Activated CD4-positive, alpha-beta memory T cell treated with anti-CD3 and anti-CD28 coated beads, Interleukin-2, amount 10 ng/mL, durations not matched to agents 7 days and 5 days (primary cell): ENCODE measurements at regions of chr20 and their contacts with region 1.

Region 1: GRCh38 chr20:33731693-33732165 is at the start of gene ZNF341:
- DNase-seq: peak; percentile 91
- H3K4me3 Mint-ChIP-seq: peak within 1 kb of the TSS; percentile 80
- H3K27ac Mint-ChIP-seq: peak within 1 kb of the TSS; percentile 91
- H3K4me1 Mint-ChIP-seq: peaks cover 28% of the 10 kb centered on the region
- H3K27me3 Mint-ChIP-seq: no peaks in the 10 kb centered on the region
- total RNA-seq, gene ZNF341: 5.6 to 5.8 TPM

Region 2: DNA sequence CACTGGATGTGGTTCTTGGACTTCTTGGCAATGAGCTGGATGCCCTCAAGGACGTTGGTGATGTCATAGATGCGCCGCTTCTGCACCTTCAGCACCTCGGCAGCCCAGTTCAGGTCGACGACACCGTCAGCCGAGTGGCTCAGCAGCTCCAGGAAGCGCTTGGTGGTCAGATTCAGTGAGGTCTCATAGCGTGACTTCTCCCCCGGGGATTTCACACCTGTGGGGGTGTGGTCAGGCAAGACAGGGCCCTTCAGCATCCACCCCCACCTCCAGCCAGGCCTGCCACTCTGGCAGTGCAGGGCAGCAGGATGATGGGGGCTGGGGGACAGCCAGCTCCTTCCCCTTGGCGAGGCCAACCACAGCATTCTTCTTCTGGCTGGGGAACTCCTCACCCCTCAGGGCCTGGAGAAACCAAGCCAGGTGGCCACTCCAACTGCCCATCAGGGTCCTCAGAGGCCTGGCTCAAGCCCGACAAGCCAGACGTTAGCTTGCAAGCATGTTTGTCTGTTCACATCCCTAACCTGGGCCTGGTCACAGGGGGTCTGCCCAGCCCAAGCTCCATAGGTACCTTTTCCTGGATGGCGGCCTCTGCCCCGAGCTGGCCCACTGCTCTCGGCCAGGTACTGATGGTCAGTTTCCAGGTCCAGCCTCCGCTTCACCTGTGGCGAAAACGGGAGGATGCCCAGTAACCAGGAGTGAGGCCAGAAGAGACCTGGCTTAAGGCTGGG is 51.8 kb before region 1 on chr20:
- CTCF ChIA-PET with region 1: interaction called, 8 read pairs
- POLR2A ChIA-PET with region 1: interaction called, 18 read pairs
- DNase-seq: peak; percentile 78
- H3K4me3 Mint-ChIP-seq: no peak overlapping the region
- H3K27ac Mint-ChIP-seq: peak overlapping the region; percentile 90
- H3K4me1 Mint-ChIP-seq: peaks cover 81% of the 10 kb centered on the region
- H3K27me3 Mint-ChIP-seq: no peaks in the 10 kb centered on the region

Region 3: GRCh38 chr20:33686100-33686983 is 45.4 kb before region 1 on chr20 and contains the start of gene E2F1:
- CTCF ChIA-PET with region 1: interaction called, 8 read pairs
- POLR2A ChIA-PET with region 1: interaction called, 18 read pairs
- DNase-seq: peak; percentile 98
- H3K4me3 Mint-ChIP-seq: peak within 1 kb of the TSS; percentile 94
- H3K27ac Mint-ChIP-seq: peak within 1 kb of the TSS; percentile 94
- H3K4me1 Mint-ChIP-seq: peaks cover 81% of the 10 kb centered on the region
- H3K27me3 Mint-ChIP-seq: no peaks in the 10 kb centered on the region
- total RNA-seq, gene E2F1: 60.0 to 61.7 TPM

Region 4: DNA sequence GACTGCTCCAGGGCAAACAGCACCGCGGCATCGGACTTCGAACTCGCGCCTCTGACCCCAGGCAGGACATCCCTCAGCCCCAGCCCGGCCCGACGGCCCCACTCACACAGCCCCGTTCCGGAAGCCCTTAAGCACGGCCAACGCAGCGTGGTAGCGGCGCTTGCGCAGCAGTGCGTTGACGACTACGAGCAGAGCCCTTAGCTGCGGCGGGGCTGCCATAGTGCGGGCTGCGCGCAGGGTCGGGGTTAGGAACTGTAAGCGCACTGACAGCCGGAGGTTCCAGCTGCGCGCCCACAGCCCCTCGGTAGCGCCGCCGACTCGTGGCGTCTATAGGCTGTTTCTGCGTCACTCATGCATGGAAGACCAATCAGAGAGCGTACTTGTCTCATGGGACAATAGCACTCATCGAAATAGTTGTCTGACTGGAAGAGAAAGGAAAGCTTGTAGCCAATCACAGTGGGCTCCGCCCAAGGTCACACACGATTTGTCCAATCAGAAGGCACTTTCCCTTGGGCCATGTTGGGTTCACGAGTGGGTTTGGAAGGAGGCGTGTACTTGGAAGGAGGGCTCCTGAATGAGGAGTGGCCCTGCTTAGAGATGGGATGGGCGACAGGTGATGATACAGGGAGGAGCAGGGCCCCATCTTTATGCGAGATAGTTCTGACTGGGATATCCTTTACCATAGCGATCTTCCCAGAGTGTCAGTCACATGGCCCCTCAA is 11.6 kb before region 1 on chr20 and contains the start of gene PXMP4:
- CTCF ChIA-PET with region 1: interaction called, 12 read pairs
- POLR2A ChIA-PET with region 1: interaction called, 27 read pairs
- DNase-seq: peak; percentile 93
- H3K4me3 Mint-ChIP-seq: peak within 1 kb of the TSS; percentile 85
- H3K27ac Mint-ChIP-seq: peak within 1 kb of the TSS; percentile 59
- H3K4me1 Mint-ChIP-seq: peaks cover 28% of the 10 kb centered on the region
- H3K27me3 Mint-ChIP-seq: no peaks in the 10 kb centered on the region
- total RNA-seq, gene PXMP4: 13.9 to 15.8 TPM

Region 5: GRCh38 chr20:33810885-33811777 is 79.4 kb after region 1 on chr20 and contains the start of gene CHMP4B:
- CTCF ChIA-PET with region 1: interaction called, 6 read pairs
- POLR2A ChIA-PET with region 1: interaction called, 25 read pairs
- DNase-seq: peak; percentile 99
- H3K4me3 Mint-ChIP-seq: peak within 1 kb of the TSS; percentile 96
- H3K27ac Mint-ChIP-seq: peak within 1 kb of the TSS; percentile 88
- H3K4me1 Mint-ChIP-seq: peaks cover 33% of the 10 kb centered on the region
- H3K27me3 Mint-ChIP-seq: no peaks in the 10 kb centered on the region
- total RNA-seq, gene CHMP4B: 86.7 to 86.9 TPM

Region 6: DNA sequence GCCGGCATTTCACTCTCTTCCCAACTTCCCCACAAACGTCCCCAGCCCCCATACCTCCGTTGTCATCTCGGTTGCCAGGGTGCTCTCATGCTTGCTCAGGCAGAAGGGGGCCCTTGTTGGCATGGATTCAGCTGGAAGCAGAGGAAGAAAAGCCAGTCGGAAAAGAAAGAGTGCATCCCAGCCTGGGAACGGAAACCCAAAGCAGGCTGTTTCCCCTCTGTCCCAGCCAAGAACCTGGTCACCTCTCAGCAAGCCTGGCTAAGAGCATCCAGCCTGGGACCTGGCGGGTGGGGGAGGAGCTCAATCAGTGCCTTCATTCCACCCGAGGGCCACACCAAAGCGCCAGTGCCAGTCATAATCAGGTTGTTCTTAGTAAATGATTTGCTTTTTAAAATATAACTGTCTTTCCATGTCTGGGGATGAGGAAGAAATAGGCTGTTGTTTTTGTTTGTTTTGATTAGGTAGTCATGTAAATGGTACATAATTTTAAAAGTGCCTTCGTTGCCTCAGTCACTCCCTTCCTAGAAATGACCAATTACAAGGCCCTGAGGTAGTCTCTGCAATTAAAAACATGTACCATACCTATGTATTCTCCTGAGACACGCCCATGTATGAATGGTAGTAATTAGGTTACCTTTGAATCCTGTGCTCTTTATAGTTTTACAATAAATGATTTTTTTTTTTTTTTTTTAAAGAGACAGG is 100.5 kb after region 1 on chr20:
- CTCF ChIA-PET with region 1: no interaction called
- POLR2A ChIA-PET with region 1: no interaction called
- DNase-seq: no peak
- H3K4me3 Mint-ChIP-seq: no peak overlapping the region
- H3K27ac Mint-ChIP-seq: no peak overlapping the region
- H3K4me1 Mint-ChIP-seq: peaks cover 25% of the 10 kb centered on the region
- H3K27me3 Mint-ChIP-seq: no peaks in the 10 kb centered on the region